Ascending aorta (tissue), 2 donors: ENCODE measurements at regions of chr2 and their contacts with region 1.

Region 1: DNA sequence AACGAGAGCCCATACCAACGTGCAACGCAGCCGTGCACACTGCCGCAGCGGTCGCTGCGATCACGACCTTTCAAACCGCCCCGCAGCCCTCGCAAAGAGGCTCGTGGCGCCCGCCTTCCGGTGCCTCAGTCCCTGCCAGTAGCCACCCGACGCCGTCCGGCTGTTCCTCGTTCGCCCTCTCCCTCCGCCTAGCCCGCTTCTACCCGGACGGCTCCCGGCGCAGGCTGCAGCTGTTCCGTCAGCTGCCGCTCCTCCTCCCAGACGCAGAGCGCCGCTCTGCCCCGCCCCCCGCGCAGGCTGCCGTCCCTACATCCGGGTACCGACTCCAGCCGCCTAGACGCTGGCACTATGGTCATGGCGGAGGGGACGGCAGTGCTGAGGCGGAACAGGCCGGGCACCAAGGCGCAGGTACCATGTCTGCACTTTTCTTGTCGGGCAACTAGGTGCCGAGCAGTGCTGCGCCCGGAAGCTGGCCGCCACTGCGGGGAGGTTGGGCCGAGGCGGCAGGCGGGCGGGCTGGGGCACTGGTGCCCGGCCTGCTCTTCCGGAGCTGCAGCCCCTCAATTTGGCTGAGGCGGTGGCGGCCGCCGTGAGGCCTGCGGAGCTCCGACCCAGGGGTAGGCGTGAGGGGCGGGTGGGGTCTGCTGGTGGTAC is at the start of gene MOB4:
- DNase-seq: peak; percentile 72 to 97
- H3K4me3 ChIP-seq: peak within 1 kb of the TSS; percentile 77 to 84
- H3K27ac ChIP-seq: peak within 1 kb of the TSS; percentile 84 to 95
- H3K4me1 ChIP-seq: peaks cover 0 to 7% of the 10 kb centered on the region in 2 donors
- H3K27me3 ChIP-seq: no peaks in the 10 kb centered on the region
- CTCF ChIP-seq: peak in 1 of 3 experiments; percentile 4
- total RNA-seq, gene MOB4: 29.2 TPM

Region 2: DNA sequence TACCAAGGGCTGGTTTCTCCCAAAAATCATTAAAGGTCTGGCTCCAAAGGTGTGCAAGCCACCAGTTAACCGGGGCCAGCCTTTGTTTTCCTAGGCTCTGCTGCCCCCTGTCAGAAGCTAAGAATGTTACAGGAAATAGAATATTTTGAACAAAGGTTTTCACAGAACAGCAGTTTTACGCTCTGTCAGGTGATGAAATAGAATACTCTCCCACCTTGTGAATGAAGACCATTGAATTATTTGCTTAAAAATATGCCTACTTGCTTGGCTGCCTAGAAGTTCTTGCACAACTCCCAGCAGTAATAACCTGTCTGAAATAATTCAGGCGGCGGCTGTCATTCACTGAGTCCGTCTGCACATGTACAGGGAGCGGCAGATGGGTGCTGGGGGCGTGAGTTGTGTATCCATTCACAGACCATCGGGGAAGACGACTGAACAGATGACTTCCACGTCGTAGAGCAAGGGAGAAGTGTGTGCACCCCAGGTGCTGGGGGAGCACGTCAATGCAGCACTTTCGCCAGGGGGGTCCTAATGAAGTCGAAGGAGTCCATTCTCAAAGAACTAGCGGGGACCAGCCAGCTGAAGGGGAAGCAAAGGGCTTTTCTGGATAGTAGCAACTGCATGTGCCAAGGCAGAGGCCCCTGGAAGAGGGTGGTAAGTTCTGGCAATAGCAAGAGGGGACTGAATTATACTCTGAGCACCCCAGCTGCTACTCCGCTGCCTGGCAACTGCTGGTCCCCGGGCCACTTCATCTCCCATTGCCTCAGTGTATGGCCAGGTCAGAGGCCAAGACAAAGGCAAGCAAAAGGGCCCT is 137.2 kb before region 1 on chr2:
- intact Hi-C with region 1: no loop called
- DNase-seq: no peak
- H3K4me3 ChIP-seq: peak overlapping the region; percentile 43 to 54
- H3K27ac ChIP-seq: peak overlapping the region; percentile 50 to 51
- H3K4me1 ChIP-seq: no peaks in the 10 kb centered on the region
- H3K27me3 ChIP-seq: no peaks in the 10 kb centered on the region
- CTCF ChIP-seq: peak; percentile 69 to 79 (median 71)

Region 3: GRCh38 chr2:197499594-197500526 is 16.0 kb before region 1 on chr2 and contains the starts of genes HSPD1 and HSPE1:
- intact Hi-C with region 1: loop called (anchors 1 kb)
- DNase-seq: peak; percentile 93 to 99
- H3K4me3 ChIP-seq: peak within 1 kb of the TSS; percentile 94 to 98
- H3K27ac ChIP-seq: peak within 1 kb of the TSS; percentile 97 to 98
- H3K4me1 ChIP-seq: peaks cover 11 to 42% of the 10 kb centered on the region in 2 donors
- H3K27me3 ChIP-seq: no peaks in the 10 kb centered on the region
- CTCF ChIP-seq: peak in 1 of 3 experiments; percentile 29
- total RNA-seq, gene HSPD1: 110 TPM
- total RNA-seq, gene HSPE1: 72.7 TPM

Region 4: GRCh38 chr2:197647961-197648690 is 132.3 kb after region 1 on chr2:
- intact Hi-C with region 1: no loop called
- DNase-seq: no peak
- H3K4me3 ChIP-seq: no peak overlapping the region
- H3K27ac ChIP-seq: no peak overlapping the region
- H3K4me1 ChIP-seq: no peaks in the 10 kb centered on the region
- H3K27me3 ChIP-seq: no peaks in the 10 kb centered on the region
- CTCF ChIP-seq: no peak

Region 5: GRCh38 chr2:197777823-197778407 is 262.0 kb after region 1 on chr2:
- intact Hi-C with region 1: loop called (anchors 10 kb)
- DNase-seq: no peak
- H3K4me3 ChIP-seq: no peak overlapping the region
- H3K27ac ChIP-seq: peak overlapping the region in 1 of 2 donors; percentile 9
- H3K4me1 ChIP-seq: peaks cover 0 to 14% of the 10 kb centered on the region in 2 donors
- H3K27me3 ChIP-seq: no peaks in the 10 kb centered on the region
- CTCF ChIP-seq: peak; percentile 59 to 80 (median 75)

Region 6: GRCh38 chr2:198873503-198874471 is 1357.9 kb after region 1 on chr2:
- intact Hi-C with region 1: loop called (anchors 5 kb)
- DNase-seq: no peak
- H3K4me3 ChIP-seq: no peak overlapping the region
- H3K27ac ChIP-seq: peak overlapping the region; percentile 87 to 90
- H3K4me1 ChIP-seq: peaks cover 0 to 15% of the 10 kb centered on the region in 2 donors
- H3K27me3 ChIP-seq: no peaks in the 10 kb centered on the region
- CTCF ChIP-seq: no peak